ENCODE measurements at regions of chr7 and their contacts with region 1.

Region 1: DNA sequence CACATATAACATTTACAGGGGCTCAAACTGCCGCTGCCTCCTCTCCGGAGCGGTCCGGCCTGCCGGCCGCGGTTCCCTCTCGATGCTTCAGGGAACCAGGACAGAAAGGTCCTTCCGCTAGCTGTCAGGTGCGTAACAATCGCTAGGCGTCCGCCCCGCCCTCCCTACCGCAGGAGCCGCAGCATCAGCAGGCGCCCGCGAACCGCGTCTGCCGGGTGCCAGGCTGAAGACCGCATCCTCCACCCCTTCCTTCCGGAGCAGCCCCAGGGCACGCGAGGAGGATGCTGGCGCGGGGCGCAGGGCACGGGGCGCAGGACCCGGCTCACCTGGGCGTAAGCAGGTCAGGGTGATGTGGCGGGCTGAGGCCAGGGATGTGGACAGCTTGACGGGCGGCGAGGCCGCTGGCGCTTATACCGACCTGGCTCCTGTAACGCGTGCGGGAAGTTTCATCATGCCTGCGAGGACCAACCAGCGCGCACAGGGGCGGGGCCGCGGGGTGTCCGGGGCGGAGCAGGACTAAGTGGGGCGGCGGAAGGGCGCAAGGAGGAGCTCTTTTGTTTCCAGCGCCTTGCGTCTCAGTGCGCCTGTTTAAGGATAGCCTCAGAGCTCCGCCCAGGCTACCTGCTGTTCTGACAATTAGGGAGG is at the start of gene ASNS:
- DNase-seq: peak; percentile 92
- ATAC-seq: peak; percentile 95
- H3K4me3 ChIP-seq: peak within 1 kb of the TSS; percentile 47 to 75 (median 70)
- H3K4me3 Mint-ChIP-seq: peak within 1 kb of the TSS; percentile 91
- H3K27ac ChIP-seq: peak within 1 kb of the TSS; percentile 68 to 85
- H3K27ac Mint-ChIP-seq: peak within 1 kb of the TSS; percentile 87
- H3K4me1 ChIP-seq: peaks cover 6 to 12% of the 10 kb centered on the region in 2 donors
- H3K4me1 Mint-ChIP-seq: peaks cover 14% of the 10 kb centered on the region
- H3K27me3 ChIP-seq: no peaks in the 10 kb centered on the region
- H3K27me3 Mint-ChIP-seq: no peaks in the 10 kb centered on the region
- CTCF ChIP-seq: no peak
- total RNA-seq, gene ASNS: 24.2 and 39.6 TPM in 2 replicates

Region 2: GRCh38 chr7:97971990-97972943 is 100.1 kb after region 1 on chr7:
- CTCF ChIA-PET with region 1: no interaction called
- POLR2A ChIA-PET with region 1: no interaction called
- intact Hi-C with region 1: loop called (anchors 2 kb)
- DNase-seq: peak; percentile 86
- ATAC-seq: peak; percentile 92
- H3K4me3 ChIP-seq: peak overlapping the region; percentile 67 to 94 (median 88)
- H3K4me3 Mint-ChIP-seq: peak overlapping the region; percentile 97
- H3K27ac ChIP-seq: peak overlapping the region; percentile 26 to 88
- H3K27ac Mint-ChIP-seq: peak overlapping the region; percentile 89
- H3K4me1 ChIP-seq: peaks cover 11 to 14% of the 10 kb centered on the region in 2 donors
- H3K4me1 Mint-ChIP-seq: peaks cover 14% of the 10 kb centered on the region
- H3K27me3 ChIP-seq: no peaks in the 10 kb centered on the region
- H3K27me3 Mint-ChIP-seq: peaks cover 5% of the 10 kb centered on the region
- CTCF ChIP-seq: no peak

Region 3: DNA sequence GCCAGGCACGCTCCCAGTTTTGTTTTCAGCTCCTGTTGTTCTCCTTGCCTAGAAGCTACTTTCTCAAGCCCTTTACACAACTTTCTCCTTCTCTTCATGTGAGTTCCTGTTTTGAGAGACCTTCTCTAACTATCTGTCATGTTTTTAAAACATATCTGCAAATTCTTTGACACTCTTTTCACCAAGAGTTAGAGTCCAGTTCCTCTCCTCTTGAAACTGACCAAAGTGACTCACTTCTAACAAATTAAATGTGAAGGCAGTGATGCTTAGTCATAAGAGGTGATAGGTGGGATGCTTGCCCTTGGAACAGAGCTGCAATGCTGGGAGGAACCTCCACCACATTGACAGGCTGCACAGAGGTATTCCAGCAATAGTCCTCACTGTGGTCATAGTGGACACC is 1769.9 kb after region 1 on chr7:
- CTCF ChIA-PET with region 1: no interaction called
- POLR2A ChIA-PET with region 1: no interaction called
- intact Hi-C with region 1: no loop called
- DNase-seq: no peak
- ATAC-seq: no peak
- H3K4me3 ChIP-seq: no peak overlapping the region
- H3K4me3 Mint-ChIP-seq: no peak overlapping the region
- H3K27ac ChIP-seq: no peak overlapping the region
- H3K27ac Mint-ChIP-seq: no peak overlapping the region
- H3K4me1 ChIP-seq: no peaks in the 10 kb centered on the region
- H3K4me1 Mint-ChIP-seq: no peaks in the 10 kb centered on the region
- H3K27me3 ChIP-seq: no peaks in the 10 kb centered on the region
- H3K27me3 Mint-ChIP-seq: no peaks in the 10 kb centered on the region
- CTCF ChIP-seq: no peak